ENCODE measurements at regions of chr9 and their contacts with region 1.

Region 1: DNA sequence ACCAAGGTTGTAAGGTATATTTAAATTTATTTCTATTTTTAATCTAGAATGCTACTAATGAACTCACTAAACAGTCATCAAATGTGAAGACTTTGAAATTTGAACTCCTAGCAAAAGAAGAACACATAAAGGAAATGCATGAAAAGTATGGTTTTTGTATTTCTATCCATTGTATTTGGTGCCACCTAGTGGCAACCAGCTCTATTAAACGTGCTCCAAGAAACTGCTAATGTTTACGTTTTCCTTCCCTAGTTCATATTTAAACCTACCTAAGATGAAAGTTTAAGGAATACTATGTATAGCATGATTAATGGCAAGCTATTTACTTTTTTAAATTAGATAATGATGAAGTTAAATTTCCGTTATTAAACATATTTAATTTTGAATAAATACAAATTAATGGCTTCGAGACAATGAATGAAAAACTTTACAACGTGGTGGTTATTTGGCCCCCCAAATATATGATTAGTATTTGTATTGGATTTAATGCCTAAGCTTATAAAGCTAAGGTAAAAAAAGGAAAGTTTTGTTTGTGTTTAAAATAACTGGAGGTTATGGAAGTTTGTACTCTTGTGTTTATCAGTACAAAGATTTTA is 115.9 kb upstream of the SH3GL2 start:
- DNase-seq: peak in 1 of 2 donors; percentile 26
- H3K4me3 ChIP-seq: no peak overlapping the region
- CTCF ChIP-seq: no peak
- POLR2A ChIP-seq: no peak

Region 2: GRCh38 chr9:15873569-15874177 is 1589.3 kb before region 1 on chr9:
- intact Hi-C with region 1: loop called (anchors 10 kb)
- DNase-seq: no peak
- H3K4me3 ChIP-seq: no peak overlapping the region
- CTCF ChIP-seq: no peak
- POLR2A ChIP-seq: no peak

Region 3: GRCh38 chr9:17134396-17135294 is 328.3 kb before region 1 on chr9 and contains the start of gene CNTLN:
- intact Hi-C with region 1: loop called (anchors 10 kb)
- DNase-seq: peak; percentile 92 to 99
- H3K4me3 ChIP-seq: peak within 1 kb of the TSS; percentile 79
- CTCF ChIP-seq: no peak
- POLR2A ChIP-seq: no peak
- total RNA-seq, gene CNTLN: 1.3 to 4.3 (median 3.7) TPM